ENCODE measurements at regions of chr1 and their contacts with region 1.

Region 1: DNA sequence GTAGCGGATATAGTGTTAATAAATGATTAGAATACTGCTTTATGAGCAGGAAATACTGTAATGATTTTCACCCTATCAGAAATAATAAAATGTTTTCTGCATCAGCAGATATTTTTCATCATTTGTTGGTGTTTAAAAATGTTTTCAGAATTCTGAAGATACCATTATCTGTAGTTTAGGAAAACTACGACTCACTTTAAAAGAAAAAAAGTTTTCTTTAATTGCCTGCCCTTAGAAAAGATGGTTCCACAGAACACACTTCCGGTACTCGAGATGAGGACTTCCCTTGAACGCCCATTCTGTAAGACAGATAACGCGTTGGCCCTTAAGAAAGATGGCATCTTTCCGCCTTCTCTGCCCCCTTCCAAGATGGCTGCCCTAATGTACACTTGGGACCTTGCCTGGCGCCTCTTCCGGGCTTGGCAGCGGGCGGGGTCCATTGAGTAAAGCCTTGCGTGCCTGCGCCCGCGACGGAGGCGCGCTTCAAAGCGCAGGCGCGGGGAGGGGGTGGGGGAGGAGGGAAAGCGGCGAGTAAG is at the start of gene SZRD1:
- DNase-seq: peak; percentile 99
- H3K4me3 ChIP-seq: peak within 1 kb of the TSS; percentile 87
- H3K27ac ChIP-seq: peak within 1 kb of the TSS; percentile 71
- H3K4me1 ChIP-seq: peaks cover 23% of the 10 kb centered on the region
- CTCF ChIP-seq: no peak
- total RNA-seq, gene SZRD1: 50.3 and 57.2 TPM in 2 replicates

Region 2: DNA sequence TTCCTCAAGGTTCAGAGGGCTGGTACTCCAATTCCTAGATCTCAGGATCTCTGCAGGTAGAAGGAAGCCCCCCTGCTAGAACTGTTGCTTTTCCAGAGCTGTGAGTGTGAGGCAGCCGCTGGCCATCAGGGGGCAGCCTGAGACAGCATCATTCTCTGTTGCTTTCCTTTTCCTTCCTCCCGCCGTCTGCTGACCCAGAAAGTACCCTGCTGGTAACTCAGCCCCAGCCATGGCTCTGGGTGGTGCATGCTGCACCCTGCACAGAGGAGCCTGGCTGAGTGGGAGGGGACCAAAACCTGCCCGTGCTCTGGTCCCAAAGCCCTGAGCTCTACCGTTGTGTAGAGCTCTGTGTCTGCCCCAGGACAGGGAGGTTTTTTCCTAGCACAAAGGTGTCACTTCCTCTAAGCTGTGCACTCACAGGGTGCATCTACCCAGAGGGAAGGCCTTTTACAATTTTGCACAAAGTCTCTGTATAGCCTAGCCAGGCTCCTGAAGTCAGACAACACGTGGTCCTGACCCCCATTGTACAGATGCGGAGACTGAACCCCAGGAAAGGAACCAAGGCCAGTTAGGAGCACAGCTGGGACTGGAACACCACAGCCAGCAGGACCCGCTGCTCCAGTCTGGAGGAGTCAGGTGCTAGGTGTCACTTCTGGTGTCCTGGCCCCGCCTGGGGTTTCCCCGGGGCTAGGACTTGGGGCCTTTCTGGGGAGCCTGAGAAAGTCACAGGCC is 287.7 kb before region 1 on chr1:
- CTCF ChIA-PET with region 1: interaction called, 3 read pairs
- POLR2A ChIA-PET with region 1: no interaction called
- intact Hi-C with region 1: loop called (anchors 1 kb)
- DNase-seq: peak; percentile 77
- H3K4me3 ChIP-seq: no peak overlapping the region
- H3K27ac ChIP-seq: no peak overlapping the region
- H3K4me1 ChIP-seq: peaks cover 6% of the 10 kb centered on the region
- CTCF ChIP-seq: peak; percentile 91

Region 3: GRCh38 chr1:16187748-16188401 is 178.9 kb before region 1 on chr1:
- CTCF ChIA-PET with region 1: no interaction called
- POLR2A ChIA-PET with region 1: no interaction called
- intact Hi-C with region 1: loop called (anchors 5 kb)
- DNase-seq: peak; percentile 66
- H3K4me3 ChIP-seq: no peak overlapping the region
- H3K27ac ChIP-seq: no peak overlapping the region
- H3K4me1 ChIP-seq: no peaks in the 10 kb centered on the region
- CTCF ChIP-seq: peak; percentile 99

Region 4: GRCh38 chr1:16206547-16207317 is 160.1 kb before region 1 on chr1:
- CTCF ChIA-PET with region 1: no interaction called
- POLR2A ChIA-PET with region 1: no interaction called
- intact Hi-C with region 1: loop called (anchors 5 kb)
- DNase-seq: peak; percentile 95
- H3K4me3 ChIP-seq: peak overlapping the region; percentile 75
- H3K27ac ChIP-seq: peak overlapping the region; percentile 65
- H3K4me1 ChIP-seq: peaks cover 6% of the 10 kb centered on the region
- CTCF ChIP-seq: no peak

Region 5: DNA sequence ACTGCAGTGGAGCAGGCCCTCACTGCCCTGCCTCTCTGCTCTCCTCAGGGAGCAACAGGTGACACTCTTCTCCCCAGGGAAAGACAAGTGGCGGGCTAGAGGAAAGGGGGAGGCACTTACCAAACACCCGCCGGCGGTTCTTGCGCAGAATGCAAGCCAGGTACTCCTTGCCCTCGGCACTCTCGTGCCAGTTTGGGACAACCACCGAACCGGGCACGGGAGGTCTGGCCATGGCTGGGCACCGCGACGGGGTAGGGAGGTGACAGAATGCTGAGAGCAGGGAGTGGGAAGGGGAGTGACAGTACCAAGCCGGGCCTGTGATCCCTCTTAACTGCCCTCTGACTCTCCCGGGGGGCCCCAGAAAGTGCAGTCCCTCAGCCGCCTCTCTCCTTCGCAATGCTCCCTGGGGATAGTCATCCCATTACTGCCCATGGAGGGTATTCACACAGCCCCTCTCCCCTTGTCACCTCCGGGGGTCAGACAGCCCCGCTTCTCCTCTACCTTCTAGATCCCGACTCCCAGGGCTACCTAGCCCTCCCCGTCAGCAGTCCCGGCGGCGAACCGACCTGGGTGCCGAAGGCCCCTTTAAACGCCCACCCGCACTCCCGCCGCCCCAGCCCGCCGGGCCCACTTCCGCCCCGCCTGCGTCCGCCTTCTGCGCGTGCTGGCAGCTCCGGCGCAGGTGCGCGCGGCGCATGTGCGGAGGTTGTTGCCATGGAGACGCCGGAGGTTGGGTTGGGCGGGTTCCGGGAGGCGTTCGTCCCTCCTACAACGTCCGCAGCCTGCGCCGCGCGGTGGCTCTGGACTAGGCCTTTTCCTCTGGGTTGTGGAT is 130.1 kb before region 1 on chr1 and contains the start of gene CPLANE2:
- CTCF ChIA-PET with region 1: no interaction called
- POLR2A ChIA-PET with region 1: no interaction called
- intact Hi-C with region 1: loop called (anchors 5 kb)
- DNase-seq: peak; percentile 96
- H3K4me3 ChIP-seq: peak within 1 kb of the TSS; percentile 80
- H3K27ac ChIP-seq: peak within 1 kb of the TSS; percentile 60
- H3K4me1 ChIP-seq: peaks cover 16% of the 10 kb centered on the region
- CTCF ChIP-seq: no peak; the same call in 1 of the 2 replicates
- total RNA-seq, gene CPLANE2: 7.9 and 11.6 TPM in 2 replicates

Region 6: GRCh38 chr1:16318555-16318954 is 48.2 kb before region 1 on chr1:
- CTCF ChIA-PET with region 1: no interaction called
- POLR2A ChIA-PET with region 1: no interaction called
- intact Hi-C with region 1: no loop called
- DNase-seq: no peak
- H3K4me3 ChIP-seq: no peak overlapping the region
- H3K27ac ChIP-seq: no peak overlapping the region
- H3K4me1 ChIP-seq: peaks cover 5% of the 10 kb centered on the region
- CTCF ChIP-seq: no peak

Region 7: GRCh38 chr1:16440470-16441281 is 73.9 kb after region 1 on chr1 and contains the start of gene NECAP2:
- CTCF ChIA-PET with region 1: no interaction called
- POLR2A ChIA-PET with region 1: interaction called, 3 read pairs
- intact Hi-C with region 1: loop called (anchors 2 kb)
- DNase-seq: peak; percentile 96
- H3K4me3 ChIP-seq: peak within 1 kb of the TSS; percentile 94
- H3K27ac ChIP-seq: peak within 1 kb of the TSS; percentile 59
- H3K4me1 ChIP-seq: peaks cover 27% of the 10 kb centered on the region
- CTCF ChIP-seq: peak; percentile 81
- total RNA-seq, gene NECAP2: 59.0 and 69.2 TPM in 2 replicates

Region 8: DNA sequence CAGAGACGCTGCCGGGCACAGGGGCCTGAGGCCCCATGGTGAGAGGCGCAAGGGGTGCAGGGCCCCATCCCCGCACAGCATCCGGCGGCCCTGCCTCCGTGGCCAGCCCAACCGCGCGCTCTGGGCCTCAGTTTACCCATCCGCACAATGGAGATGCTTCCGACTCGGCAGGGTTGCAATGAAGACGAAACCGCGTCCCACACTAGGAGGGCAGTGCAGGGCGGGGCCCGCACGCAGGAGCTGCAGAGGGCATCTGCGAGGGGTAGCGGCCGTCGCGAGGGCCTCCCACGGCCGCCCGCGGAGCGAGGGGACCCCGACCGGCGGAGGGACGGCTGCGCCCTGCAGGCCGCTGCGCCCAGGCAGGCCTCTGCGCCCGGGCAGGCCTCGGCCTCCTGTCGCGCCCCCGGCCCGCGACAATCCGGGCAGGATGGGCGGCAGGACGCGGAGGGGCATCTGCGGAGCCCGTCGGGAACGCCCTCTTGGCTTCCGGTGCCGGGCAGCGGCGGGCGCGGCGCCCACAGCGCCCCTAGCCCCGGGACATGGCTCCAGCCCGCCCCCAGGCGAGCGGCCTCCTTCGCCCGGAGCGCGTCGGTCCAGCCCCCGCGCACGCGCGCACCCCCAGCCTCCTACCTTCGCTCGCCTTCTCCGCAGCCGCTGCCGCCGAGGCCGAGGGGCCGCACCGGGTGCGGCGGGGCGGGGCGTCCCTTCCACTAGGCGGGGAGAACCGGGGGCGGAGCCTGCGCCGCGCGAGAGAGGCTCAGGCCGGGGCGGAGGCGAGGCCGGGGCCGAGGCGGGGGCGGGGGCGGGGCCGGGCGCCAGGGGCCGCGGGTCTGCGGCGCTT is 132.0 kb after region 1 on chr1:
- CTCF ChIA-PET with region 1: no interaction called
- POLR2A ChIA-PET with region 1: interaction called, 5 read pairs
- intact Hi-C with region 1: loop called (anchors 2 kb)
- DNase-seq: peak; percentile 89
- H3K4me3 ChIP-seq: peak overlapping the region; percentile 79
- H3K27ac ChIP-seq: no peak overlapping the region
- H3K4me1 ChIP-seq: peaks cover 11% of the 10 kb centered on the region
- CTCF ChIP-seq: peak; percentile 34; the same call in 1 of the 2 replicates

Measured in OCI-LY7 (cell line).